Activated CD4-positive, alpha-beta memory T cell treated with anti-CD3 and anti-CD28 coated beads for 36 hours (primary cell): ENCODE measurements at regions of chr12 and their contacts with region 1.

Region 1: DNA sequence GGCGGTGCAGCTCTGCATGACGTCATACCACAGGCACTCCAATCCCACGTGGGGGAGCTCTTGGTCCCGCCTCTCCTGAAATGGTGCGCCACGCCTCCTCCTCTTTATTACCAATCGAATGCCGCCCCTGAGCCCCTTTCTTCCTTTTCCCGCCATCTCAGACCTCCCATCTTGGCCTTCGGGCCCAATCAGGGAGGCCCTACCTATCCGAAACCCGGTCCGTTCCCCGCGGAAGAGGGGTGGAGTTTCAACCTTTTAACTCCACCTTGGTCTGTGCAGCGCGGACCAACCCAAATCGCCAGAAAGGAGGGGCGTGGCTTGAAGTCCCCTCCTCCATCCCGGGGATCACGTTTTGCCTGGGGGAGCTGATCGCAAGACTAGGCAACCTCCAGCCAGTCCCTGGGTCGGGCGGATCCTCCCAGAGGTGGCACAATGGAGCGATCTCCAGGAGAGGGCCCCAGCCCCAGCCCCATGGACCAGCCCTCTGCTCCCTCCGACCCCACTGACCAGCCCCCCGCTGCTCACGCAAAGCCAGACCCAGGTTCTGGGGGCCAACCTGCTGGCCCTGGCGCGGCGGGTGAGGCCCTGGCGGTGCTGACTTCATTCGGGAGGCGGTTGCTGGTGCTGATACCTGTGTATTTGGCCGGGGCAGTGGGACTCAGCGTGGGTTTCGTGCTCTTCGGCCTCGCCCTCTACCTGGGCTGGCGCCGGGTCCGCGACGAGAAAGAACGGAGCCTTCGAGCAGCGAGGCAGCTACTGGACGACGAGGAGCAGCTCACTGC is at the start of gene ESYT1:
- DNase-seq: peak; percentile 99
- H3K4me3 Mint-ChIP-seq: peak within 1 kb of the TSS; percentile 97
- H3K27ac Mint-ChIP-seq: peak within 1 kb of the TSS; percentile 93
- H3K4me1 Mint-ChIP-seq: peaks cover 60% of the 10 kb centered on the region
- H3K27me3 Mint-ChIP-seq: no peaks in the 10 kb centered on the region
- total RNA-seq, gene ESYT1: 142 to 146 TPM

Region 2: DNA sequence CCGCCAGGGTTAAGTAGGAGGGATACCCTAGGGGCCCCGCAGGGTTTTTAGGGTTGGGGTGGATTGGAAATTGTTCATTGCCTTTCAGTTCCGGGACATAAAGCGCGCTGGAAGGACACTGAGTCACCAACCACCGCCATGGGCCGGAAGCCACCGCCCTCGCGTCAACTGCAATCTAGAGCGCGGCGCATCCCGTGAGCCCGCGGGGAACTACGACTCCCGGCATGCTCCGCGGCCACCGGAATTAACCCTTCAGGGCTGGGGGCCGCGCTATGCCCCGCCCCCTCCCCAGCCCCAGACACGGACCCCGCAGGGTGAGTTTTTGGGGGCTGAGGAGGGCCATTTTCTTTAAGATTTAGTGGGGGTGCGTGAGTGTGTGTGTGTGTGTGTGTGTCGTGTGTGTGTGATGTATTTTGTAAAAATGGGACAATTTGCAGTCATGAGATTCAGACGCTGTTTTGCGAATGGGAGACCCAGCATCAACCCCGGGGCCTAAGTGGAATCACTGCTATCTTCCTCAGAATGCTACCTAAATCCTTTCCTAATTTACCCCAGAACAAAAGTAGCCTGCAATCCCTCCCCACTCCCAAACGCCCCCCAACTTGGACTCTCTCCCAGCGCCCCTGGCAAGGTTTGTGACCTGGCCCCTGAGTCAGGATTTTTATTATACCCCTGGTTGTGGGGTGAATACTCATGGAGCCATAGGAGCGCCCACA is 24.4 kb after region 1 on chr12 and contains the start of gene MYL6B:
- CTCF ChIA-PET with region 1: interaction called, 54 read pairs
- POLR2A ChIA-PET with region 1: interaction called, 15 read pairs
- intact Hi-C with region 1: loop called (anchors 1 kb)
- DNase-seq: peak; percentile 97
- H3K4me3 Mint-ChIP-seq: peak within 1 kb of the TSS; percentile 78
- H3K27ac Mint-ChIP-seq: peak within 1 kb of the TSS; percentile 96
- H3K4me1 Mint-ChIP-seq: peaks cover 34% of the 10 kb centered on the region
- H3K27me3 Mint-ChIP-seq: no peaks in the 10 kb centered on the region
- total RNA-seq, gene MYL6B: 63.8 to 70.8 TPM

Region 3: GRCh38 chr12:56158029-56158925 is 30.2 kb after region 1 on chr12 and contains the start of gene MYL6:
- CTCF ChIA-PET with region 1: interaction called, 46 read pairs
- POLR2A ChIA-PET with region 1: interaction called, 19 read pairs
- intact Hi-C with region 1: loop called (anchors 1 kb)
- DNase-seq: peak; percentile 95
- H3K4me3 Mint-ChIP-seq: peak within 1 kb of the TSS; percentile 95
- H3K27ac Mint-ChIP-seq: peak within 1 kb of the TSS; percentile 98
- H3K4me1 Mint-ChIP-seq: peaks cover 42% of the 10 kb centered on the region
- H3K27me3 Mint-ChIP-seq: no peaks in the 10 kb centered on the region
- total RNA-seq, gene MYL6: 1,196 to 1,215 TPM

Region 4: GRCh38 chr12:56258057-56258819 is 130.2 kb after region 1 on chr12 and contains the start of gene ANKRD52:
- CTCF ChIA-PET with region 1: interaction called, 10 read pairs
- POLR2A ChIA-PET with region 1: no interaction called
- intact Hi-C with region 1: no loop called
- DNase-seq: peak; percentile 82
- H3K4me3 Mint-ChIP-seq: peak within 1 kb of the TSS; percentile 87
- H3K27ac Mint-ChIP-seq: peak within 1 kb of the TSS; percentile 81
- H3K4me1 Mint-ChIP-seq: peaks cover 19% of the 10 kb centered on the region
- H3K27me3 Mint-ChIP-seq: no peaks in the 10 kb centered on the region
- total RNA-seq, gene ANKRD52: 34.1 to 37.0 TPM